Activated CD4-positive, alpha-beta T cell treated with anti-CD3 and anti-CD28 coated beads, Interleukin-2, amount 10 ng/mL, durations not matched to agents 24 days and 14 days (primary cell): ENCODE measurements at regions of chr20 and their contacts with region 1.

Region 1: DNA sequence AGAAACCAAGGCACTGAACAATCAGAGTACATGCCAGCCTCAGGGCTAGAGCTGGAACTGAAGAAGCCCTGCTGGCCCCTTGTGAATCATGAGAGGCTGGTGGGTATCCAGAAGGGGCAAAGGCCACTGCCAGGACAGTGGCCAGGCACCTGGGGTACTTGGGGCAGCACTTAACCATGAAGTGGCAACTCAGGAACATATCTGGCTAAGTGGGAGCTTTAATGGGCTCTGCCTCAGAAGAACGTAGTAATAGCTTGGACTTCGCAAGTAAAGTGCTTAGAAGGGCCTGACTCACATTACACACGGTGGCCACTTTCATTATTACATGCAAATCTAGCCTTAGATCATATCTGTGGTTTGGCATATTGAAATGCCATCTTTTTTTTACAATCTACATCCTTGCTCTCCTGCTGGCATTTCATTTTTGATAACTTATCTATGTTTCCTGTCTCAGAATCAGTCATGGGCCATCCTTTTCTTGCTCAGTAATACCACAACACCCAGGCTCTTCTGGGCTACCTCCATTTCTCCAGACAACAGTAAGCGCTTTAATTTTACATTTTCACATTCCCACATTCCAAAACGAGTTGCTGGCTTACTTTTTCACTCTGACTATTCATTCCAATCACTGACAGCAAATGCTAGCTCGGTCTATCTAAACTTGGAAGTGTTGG is 21.6 kb downstream of the NAPB start:
- DNase-seq: peak; percentile 66
- H3K4me3 Mint-ChIP-seq: peak overlapping the region; percentile 6
- H3K27ac Mint-ChIP-seq: peak overlapping the region; percentile 27
- H3K4me1 Mint-ChIP-seq: peaks cover 48% of the 10 kb centered on the region
- H3K27me3 Mint-ChIP-seq: no peaks in the 10 kb centered on the region

Region 2: DNA sequence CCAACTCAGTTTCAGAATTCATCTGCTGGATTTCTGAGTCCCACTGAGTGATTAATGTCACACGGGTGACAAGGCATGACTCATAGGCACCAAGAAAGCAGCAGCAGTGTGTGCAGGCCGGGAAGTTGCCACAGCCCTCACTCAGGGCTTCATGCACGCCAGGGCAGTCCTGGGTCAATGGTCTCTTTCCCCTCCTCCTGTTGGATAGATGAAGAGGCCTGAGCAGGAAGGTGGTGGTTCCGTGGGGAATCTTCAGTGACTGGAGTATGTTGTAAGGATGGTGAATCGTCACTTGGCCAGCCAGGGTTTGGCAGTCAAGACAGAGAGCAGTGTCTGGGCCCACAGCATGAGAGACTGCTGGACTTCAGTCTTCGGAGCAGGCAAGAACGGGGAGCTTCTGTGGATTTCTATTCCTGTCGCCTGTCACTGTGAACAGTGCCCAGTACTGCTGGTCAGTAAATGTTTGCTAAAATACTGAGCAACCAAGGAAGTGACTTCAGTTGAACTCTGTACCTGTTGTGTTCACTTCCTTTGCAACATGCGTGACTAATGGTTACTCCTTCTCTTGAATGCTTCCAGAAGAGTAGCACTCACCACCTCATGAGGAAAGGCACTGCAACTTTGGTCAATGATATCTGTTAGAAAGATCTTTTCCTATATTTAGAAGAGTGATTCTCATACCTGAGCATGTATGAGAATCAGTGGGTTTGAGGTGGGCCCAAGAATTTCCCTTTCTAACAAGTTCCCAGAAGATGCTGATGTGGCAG is 251.6 kb before region 1 on chr20:
- intact Hi-C with region 1: loop called (anchors 10 kb)
- DNase-seq: peak; percentile 79
- H3K4me3 Mint-ChIP-seq: peak overlapping the region; percentile 57
- H3K27ac Mint-ChIP-seq: peak overlapping the region; percentile 94
- H3K4me1 Mint-ChIP-seq: peaks cover 63% of the 10 kb centered on the region
- H3K27me3 Mint-ChIP-seq: peaks cover 4% of the 10 kb centered on the region

Region 3: GRCh38 chr20:23350196-23350903 is 49.4 kb before region 1 on chr20 and contains the start of gene NXT1:
- intact Hi-C with region 1: loop called (anchors 1 kb)
- DNase-seq: peak; percentile 99
- H3K4me3 Mint-ChIP-seq: peak within 1 kb of the TSS; percentile 88
- H3K27ac Mint-ChIP-seq: peak within 1 kb of the TSS; percentile 100
- H3K4me1 Mint-ChIP-seq: peaks cover 30% of the 10 kb centered on the region
- H3K27me3 Mint-ChIP-seq: no peaks in the 10 kb centered on the region
- total RNA-seq, gene NXT1: 57.0 and 59.9 TPM in 2 replicates

Region 4: GRCh38 chr20:23361598-23362384 is 37.9 kb before region 1 on chr20 and contains the start of gene GZF1:
- intact Hi-C with region 1: loop called (anchors 1 kb)
- DNase-seq: peak; percentile 100
- H3K4me3 Mint-ChIP-seq: peak within 1 kb of the TSS; percentile 92
- H3K27ac Mint-ChIP-seq: peak within 1 kb of the TSS; percentile 94
- H3K4me1 Mint-ChIP-seq: peaks cover 53% of the 10 kb centered on the region
- H3K27me3 Mint-ChIP-seq: peaks cover 2% of the 10 kb centered on the region
- total RNA-seq, gene GZF1: 10.3 and 14.7 TPM in 2 replicates

Region 5: GRCh38 chr20:23420943-23421931 is 21.5 kb after region 1 on chr20 and contains the start of gene NAPB:
- intact Hi-C with region 1: loop called (anchors 1 kb)
- DNase-seq: peak; percentile 98
- H3K4me3 Mint-ChIP-seq: peak within 1 kb of the TSS; percentile 98
- H3K27ac Mint-ChIP-seq: peak within 1 kb of the TSS; percentile 94
- H3K4me1 Mint-ChIP-seq: peaks cover 49% of the 10 kb centered on the region
- H3K27me3 Mint-ChIP-seq: peaks cover 7% of the 10 kb centered on the region
- total RNA-seq, gene NAPB: 13.6 and 14.2 TPM in 2 replicates